ENCODE measurements at regions of chr1 and their contacts with region 1.

Region 1: DNA sequence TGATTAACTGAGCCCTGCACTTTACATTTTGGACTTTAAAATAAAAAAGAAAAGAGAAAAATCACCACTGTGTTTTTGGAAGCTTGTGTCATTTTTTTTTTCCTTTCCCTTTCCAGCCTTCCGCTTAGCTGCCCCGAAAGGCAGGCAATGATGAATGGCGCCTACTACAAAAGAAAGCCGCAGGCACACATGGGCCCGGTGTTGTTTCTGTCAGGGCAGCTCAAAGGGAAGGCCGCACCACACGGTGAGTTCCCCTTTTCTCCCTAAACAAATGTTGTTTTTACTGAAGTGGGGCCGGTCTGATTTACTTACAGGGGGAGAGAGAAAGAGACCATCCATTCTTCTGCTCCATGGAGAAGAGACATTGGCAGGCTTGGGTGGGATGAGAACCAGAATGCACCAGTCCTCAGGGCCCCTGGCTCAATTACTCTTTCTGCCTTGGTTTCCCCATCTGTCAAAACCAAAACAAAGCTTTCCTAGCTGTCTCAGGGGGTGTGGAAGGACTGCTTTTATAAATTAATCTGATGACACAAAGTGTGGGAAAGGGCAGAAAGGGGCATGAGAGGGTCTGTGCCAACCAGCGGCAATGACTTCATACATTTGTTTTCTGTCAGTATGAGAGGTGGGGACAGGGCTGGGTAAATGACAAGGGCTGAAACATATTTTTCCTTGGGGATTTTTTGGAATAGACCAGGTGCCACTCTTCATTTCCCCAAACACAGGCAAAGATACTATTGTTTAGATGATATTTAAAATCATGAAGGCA is 91.4 kb upstream of the PLXNA2 start:
- DNase-seq: no peak
- H3K4me3 ChIP-seq: no peak overlapping the region
- H3K4me3 Mint-ChIP-seq: no peak overlapping the region
- H3K27ac Mint-ChIP-seq: no peak overlapping the region
- H3K4me1 ChIP-seq: no peaks in the 10 kb centered on the region
- H3K4me1 Mint-ChIP-seq: no peaks in the 10 kb centered on the region
- H3K27me3 ChIP-seq: no peaks in the 10 kb centered on the region; the same call in 1 of the 2 replicates
- H3K27me3 Mint-ChIP-seq: peaks cover 20% of the 10 kb centered on the region
- CTCF ChIP-seq: no peak

Region 2: GRCh38 chr1:208324005-208324404 is 11.5 kb before region 1 on chr1:
- CTCF ChIA-PET with region 1: no interaction called
- POLR2A ChIA-PET with region 1: no interaction called
- intact Hi-C with region 1: loop called (anchors 1 kb)
- DNase-seq: peak in 1 of 2 experiments; percentile 8
- H3K4me3 ChIP-seq: no peak overlapping the region
- H3K4me3 Mint-ChIP-seq: no peak overlapping the region
- H3K27ac Mint-ChIP-seq: no peak overlapping the region
- H3K4me1 ChIP-seq: no peaks in the 10 kb centered on the region
- H3K4me1 Mint-ChIP-seq: no peaks in the 10 kb centered on the region
- H3K27me3 ChIP-seq: no peaks in the 10 kb centered on the region
- H3K27me3 Mint-ChIP-seq: peaks cover 25% of the 10 kb centered on the region
- CTCF ChIP-seq: no peak

Region 3: GRCh38 chr1:208357644-208358507 is 22.3 kb after region 1 on chr1:
- CTCF ChIA-PET with region 1: no interaction called
- POLR2A ChIA-PET with region 1: no interaction called
- intact Hi-C with region 1: no loop called
- DNase-seq: no peak
- H3K4me3 ChIP-seq: no peak overlapping the region
- H3K4me3 Mint-ChIP-seq: no peak overlapping the region
- H3K27ac Mint-ChIP-seq: no peak overlapping the region
- H3K4me1 ChIP-seq: peaks cover 13% of the 10 kb centered on the region
- H3K4me1 Mint-ChIP-seq: peaks cover 7% of the 10 kb centered on the region
- H3K27me3 ChIP-seq: no peaks in the 10 kb centered on the region
- H3K27me3 Mint-ChIP-seq: peaks cover 8% of the 10 kb centered on the region
- CTCF ChIP-seq: no peak